ENCODE measurements at regions of chr15 and their contacts with region 1.

Region 1: GRCh38 chr15:94670438-94671034 is 439.2 kb downstream of the MCTP2 start:
- DNase-seq: no peak
- ATAC-seq: no peak
- H3K4me3 ChIP-seq: no peak overlapping the region
- H3K27ac ChIP-seq: no peak overlapping the region
- H3K4me1 ChIP-seq: no peaks in the 10 kb centered on the region
- H3K27me3 ChIP-seq: peaks cover 0 to 2% of the 10 kb centered on the region in 2 donors

Region 2: GRCh38 chr15:94631608-94632007 is 38.9 kb before region 1 on chr15:
- intact Hi-C with region 1: no loop called
- DNase-seq: no peak
- ATAC-seq: no peak
- H3K4me3 ChIP-seq: no peak overlapping the region
- H3K27ac ChIP-seq: no peak overlapping the region
- H3K4me1 ChIP-seq: no peaks in the 10 kb centered on the region
- H3K27me3 ChIP-seq: no peaks in the 10 kb centered on the region

Region 3: GRCh38 chr15:94844538-94845389 is 174.2 kb after region 1 on chr15:
- intact Hi-C with region 1: loop called (anchors 5 kb)
- DNase-seq: peak; percentile 62 to 88
- ATAC-seq: peak; percentile 75
- H3K4me3 ChIP-seq: peak overlapping the region; percentile 28 to 29
- H3K27ac ChIP-seq: peak overlapping the region; percentile 84 to 89
- H3K4me1 ChIP-seq: peaks cover 0 to 3% of the 10 kb centered on the region in 2 donors
- H3K27me3 ChIP-seq: no peaks in the 10 kb centered on the region

Region 4: DNA sequence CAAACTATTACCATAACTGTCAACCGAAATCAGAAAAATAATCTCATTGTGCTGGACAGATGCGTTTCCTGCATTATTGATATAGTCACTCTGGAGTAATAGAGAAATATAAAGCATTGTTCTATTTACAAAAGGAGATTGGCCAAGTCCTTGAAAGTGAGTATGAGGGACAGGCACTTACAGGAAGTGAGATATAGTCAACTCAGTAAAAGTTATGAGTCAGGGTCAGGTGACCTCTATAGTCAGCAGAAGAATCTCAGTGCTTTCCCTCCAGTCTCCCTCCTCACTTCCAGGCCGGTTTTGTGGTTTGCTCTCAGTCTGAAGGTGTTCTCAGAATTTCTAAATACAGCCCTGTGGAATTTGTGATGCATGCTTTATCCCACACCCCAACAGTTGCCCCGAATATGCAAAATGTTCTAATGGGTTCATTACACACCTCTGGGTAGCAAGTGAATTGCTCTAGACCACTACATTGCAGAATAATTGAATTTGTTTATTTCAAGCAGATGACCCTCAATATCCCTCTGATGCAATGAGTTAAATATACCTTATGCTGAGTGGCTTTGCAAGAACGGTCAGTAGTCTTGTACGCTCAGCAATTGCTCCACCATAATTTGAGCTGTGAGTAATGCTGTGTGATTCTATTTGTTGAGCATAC is 348.5 kb after region 1 on chr15:
- intact Hi-C with region 1: loop called (anchors 5 to 10 kb)
- DNase-seq: no peak
- ATAC-seq: no peak
- H3K4me3 ChIP-seq: no peak overlapping the region
- H3K27ac ChIP-seq: no peak overlapping the region
- H3K4me1 ChIP-seq: no peaks in the 10 kb centered on the region
- H3K27me3 ChIP-seq: no peaks in the 10 kb centered on the region

Region 5: GRCh38 chr15:95025924-95026728 is 355.6 kb after region 1 on chr15:
- intact Hi-C with region 1: loop called in 1 of 2 experiments (anchors 10 kb)
- DNase-seq: peak; percentile 52 to 78
- ATAC-seq: peak; percentile 29
- H3K4me3 ChIP-seq: no peak overlapping the region
- H3K27ac ChIP-seq: no peak overlapping the region
- H3K4me1 ChIP-seq: no peaks in the 10 kb centered on the region
- H3K27me3 ChIP-seq: no peaks in the 10 kb centered on the region

Region 6: DNA sequence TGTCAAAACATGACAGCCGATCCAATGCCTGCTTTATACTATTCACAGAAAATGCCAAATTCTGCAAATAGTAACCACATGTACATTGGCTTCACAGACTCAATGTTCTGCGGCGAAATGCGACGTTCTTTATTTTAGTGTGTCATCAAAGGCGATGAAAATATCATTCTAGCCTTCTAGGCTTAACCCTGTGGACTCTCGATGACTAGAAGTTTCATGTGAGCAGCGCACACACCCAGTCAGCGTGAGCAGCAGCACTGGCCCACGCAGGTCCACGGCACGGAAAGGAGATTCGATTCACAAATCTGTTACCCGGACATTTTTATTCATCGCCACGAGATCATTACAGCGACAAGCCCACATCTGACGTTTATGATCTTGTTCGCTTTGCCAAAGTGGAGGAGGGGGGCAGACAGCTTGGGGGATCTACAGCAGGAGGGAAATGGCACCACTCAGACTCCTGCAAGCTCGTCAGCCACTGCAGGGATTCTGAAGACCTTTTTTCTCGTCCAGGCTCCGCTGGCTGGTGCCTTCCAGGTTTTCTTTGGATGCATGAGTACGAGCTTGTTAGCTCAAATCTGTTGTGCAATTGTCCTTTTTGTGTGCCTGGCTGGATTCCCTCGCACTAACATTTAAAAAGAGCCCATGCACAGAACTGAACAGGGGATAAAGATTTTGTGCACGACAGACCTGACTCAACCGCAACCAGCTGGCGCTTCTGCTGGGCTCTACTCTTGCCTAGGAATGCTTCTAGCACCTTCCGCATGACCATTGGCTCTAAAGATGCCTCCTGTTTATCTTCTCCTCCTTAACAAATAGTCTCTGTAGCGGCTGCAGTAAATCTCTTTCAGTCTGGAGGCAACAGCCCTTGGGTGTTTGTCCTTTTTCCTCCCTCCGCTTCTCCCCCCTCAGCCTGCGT is 499.3 kb after region 1 on chr15:
- intact Hi-C with region 1: loop called in 1 of 2 experiments (anchors 10 kb)
- DNase-seq: peak; percentile 45 to 65
- ATAC-seq: peak; percentile 67
- H3K4me3 ChIP-seq: no peak overlapping the region
- H3K27ac ChIP-seq: no peak overlapping the region
- H3K4me1 ChIP-seq: peaks cover 0 to 2% of the 10 kb centered on the region in 2 donors
- H3K27me3 ChIP-seq: no peaks in the 10 kb centered on the region